Naive thymus-derived CD4-positive, alpha-beta T cell (primary cell): ENCODE measurements at regions of chr20 and their contacts with region 1.

Region 1: DNA sequence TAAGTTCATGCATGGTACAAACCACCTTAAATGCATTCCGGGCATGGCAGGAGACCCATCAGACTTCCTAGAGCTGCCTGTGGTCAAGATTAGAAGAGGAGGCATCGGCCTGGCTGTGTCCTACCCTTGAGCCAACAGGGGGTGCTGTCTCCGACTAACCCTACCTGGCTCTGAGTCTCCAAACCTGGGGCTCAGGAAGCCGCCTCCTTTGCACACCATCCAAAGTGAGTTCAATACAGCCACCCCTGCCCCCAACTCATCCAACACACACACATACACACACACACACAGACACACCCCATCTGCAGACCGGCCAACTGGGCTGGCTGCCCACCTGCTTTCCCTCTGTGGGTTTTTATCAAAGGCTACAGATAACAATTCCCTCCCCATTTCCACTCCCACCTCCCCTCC is 77.0 kb downstream of the JPH2 start:
- DNase-seq: no peak
- ATAC-seq: no peak
- H3K4me3 ChIP-seq: no peak overlapping the region
- H3K4me3 Mint-ChIP-seq: no peak overlapping the region
- H3K27ac ChIP-seq: no peak overlapping the region
- H3K27ac Mint-ChIP-seq: no peak overlapping the region
- H3K4me1 ChIP-seq: no peaks in the 10 kb centered on the region
- H3K4me1 Mint-ChIP-seq: peaks cover 0 to 6% (median 0%) of the 10 kb centered on the region in 7 donors
- H3K27me3 ChIP-seq: no peaks in the 10 kb centered on the region
- H3K27me3 Mint-ChIP-seq: peaks cover 15 to 45% (median 44%) of the 10 kb centered on the region in 5 donors

Region 2: GRCh38 chr20:44166477-44166876 is 56.5 kb after region 1 on chr20:
- CTCF ChIA-PET with region 1: no interaction called
- POLR2A ChIA-PET with region 1: no interaction called
- intact Hi-C with region 1: no loop called
- DNase-seq: no peak
- ATAC-seq: no peak
- H3K4me3 ChIP-seq: no peak overlapping the region
- H3K4me3 Mint-ChIP-seq: no peak overlapping the region
- H3K27ac ChIP-seq: no peak overlapping the region
- H3K27ac Mint-ChIP-seq: no peak overlapping the region
- H3K4me1 ChIP-seq: no peaks in the 10 kb centered on the region
- H3K4me1 Mint-ChIP-seq: peaks cover 0 to 2% (median 0%) of the 10 kb centered on the region in 7 donors
- H3K27me3 ChIP-seq: no peaks in the 10 kb centered on the region
- H3K27me3 Mint-ChIP-seq: peaks cover 26 to 59% (median 48%) of the 10 kb centered on the region in 5 donors

Region 3: GRCh38 chr20:44861531-44862006 is 751.6 kb after region 1 on chr20:
- CTCF ChIA-PET with region 1: no interaction called
- POLR2A ChIA-PET with region 1: no interaction called
- intact Hi-C with region 1: loop called in 1 of 2 experiments (anchors 10 kb)
- DNase-seq: no peak
- ATAC-seq: no peak
- H3K4me3 ChIP-seq: no peak overlapping the region
- H3K4me3 Mint-ChIP-seq: no peak overlapping the region
- H3K27ac ChIP-seq: no peak overlapping the region
- H3K27ac Mint-ChIP-seq: peak overlapping the region in 1 of 9 donors; percentile 43
- H3K4me1 ChIP-seq: no peaks in the 10 kb centered on the region
- H3K4me1 Mint-ChIP-seq: peaks cover 0 to 13% (median 8%) of the 10 kb centered on the region in 7 donors
- H3K27me3 ChIP-seq: no peaks in the 10 kb centered on the region
- H3K27me3 Mint-ChIP-seq: peaks cover 0 to 9% (median 0%) of the 10 kb centered on the region in 5 donors